ENCODE measurements at regions of chr17 and their contacts with region 1.

Region 1: GRCh38 chr17:9924735-9925191 is 19.7 kb upstream of the RCVRN start:
- DNase-seq: peak in 3 of 9 experiments; percentile 11 to 67 (median 58)
- ATAC-seq: no peak
- H3K4me3 ChIP-seq: no peak overlapping the region
- H3K4me3 Mint-ChIP-seq: no peak overlapping the region
- H3K27ac ChIP-seq: no peak overlapping the region
- H3K27ac Mint-ChIP-seq: no peak overlapping the region
- H3K4me1 ChIP-seq: no peaks in the 10 kb centered on the region
- H3K4me1 Mint-ChIP-seq: peaks cover 2% of the 10 kb centered on the region
- H3K27me3 ChIP-seq: no peaks in the 10 kb centered on the region
- H3K27me3 Mint-ChIP-seq: no peaks in the 10 kb centered on the region
- CTCF ChIP-seq: peak; percentile 63

Region 2: DNA sequence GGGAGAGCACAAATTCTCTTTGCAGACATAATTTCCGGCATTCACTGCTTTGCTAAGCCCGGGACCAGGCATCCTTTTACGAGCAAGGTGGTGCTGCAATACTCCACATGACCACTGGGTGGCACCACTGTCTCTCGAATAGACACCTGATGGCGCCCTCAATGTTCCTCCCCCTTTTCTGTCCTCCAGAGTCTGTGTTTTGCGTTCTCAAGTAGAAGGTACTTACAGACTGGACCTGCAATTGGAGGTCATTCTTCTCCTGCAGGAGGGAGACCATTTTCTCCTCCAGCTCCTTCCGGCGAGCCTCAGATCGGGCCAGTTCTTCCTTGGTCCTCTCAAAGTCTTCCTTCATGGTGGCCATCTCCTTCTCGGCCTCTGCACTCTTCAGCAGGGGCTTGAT is 402.9 kb after region 1 on chr17:
- CTCF ChIA-PET with region 1: interaction called, 3 read pairs
- POLR2A ChIA-PET with region 1: no interaction called
- intact Hi-C with region 1: loop called in 1 of 2 experiments (anchors 10 kb)
- DNase-seq: peak; percentile 28 to 76 (median 66)
- ATAC-seq: no peak
- H3K4me3 ChIP-seq: no peak overlapping the region
- H3K4me3 Mint-ChIP-seq: no peak overlapping the region
- H3K27ac ChIP-seq: no peak overlapping the region
- H3K27ac Mint-ChIP-seq: no peak overlapping the region
- H3K4me1 ChIP-seq: no peaks in the 10 kb centered on the region
- H3K4me1 Mint-ChIP-seq: no peaks in the 10 kb centered on the region
- H3K27me3 ChIP-seq: no peaks in the 10 kb centered on the region
- H3K27me3 Mint-ChIP-seq: peaks cover 12% of the 10 kb centered on the region
- CTCF ChIP-seq: peak; percentile 92

Region 3: DNA sequence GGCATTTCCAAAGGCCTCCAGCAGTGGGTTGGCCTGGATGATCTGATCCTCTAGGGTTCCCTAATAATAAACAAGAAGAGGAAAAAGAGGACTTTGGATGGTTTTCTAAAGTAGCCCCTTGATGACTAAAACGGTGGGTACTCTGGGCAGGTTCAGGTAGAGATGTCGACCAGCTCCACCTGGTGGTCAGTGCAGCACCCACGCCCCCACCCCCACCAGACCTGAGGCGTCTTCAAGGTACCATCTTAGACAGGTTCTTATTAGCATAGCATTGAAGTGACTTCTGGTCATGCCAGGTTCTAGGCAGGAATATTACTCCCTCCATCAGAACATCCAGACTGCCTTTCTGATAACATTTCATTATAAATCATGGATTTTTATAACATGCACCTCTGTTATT is 433.0 kb after region 1 on chr17:
- CTCF ChIA-PET with region 1: no interaction called
- POLR2A ChIA-PET with region 1: no interaction called
- intact Hi-C with region 1: loop called (anchors 1 to 5 kb)
- DNase-seq: peak in 4 of 9 experiments; percentile 19 to 47 (median 28)
- ATAC-seq: no peak
- H3K4me3 ChIP-seq: no peak overlapping the region
- H3K4me3 Mint-ChIP-seq: no peak overlapping the region
- H3K27ac ChIP-seq: no peak overlapping the region
- H3K27ac Mint-ChIP-seq: no peak overlapping the region
- H3K4me1 ChIP-seq: no peaks in the 10 kb centered on the region
- H3K4me1 Mint-ChIP-seq: no peaks in the 10 kb centered on the region
- H3K27me3 ChIP-seq: peaks cover 0 to 4% of the 10 kb centered on the region in 2 experiments
- H3K27me3 Mint-ChIP-seq: peaks cover 11% of the 10 kb centered on the region
- CTCF ChIP-seq: peak; percentile 33

Measured in CD8-positive, alpha-beta T cell (primary cell).